ENCODE measurements at regions of chr20 and their contacts with region 1.

Region 1: GRCh38 chr20:58236612-58237330 is 8.3 kb upstream of the ANKRD60 start:
- DNase-seq: peak; percentile 63 to 92 (median 79)
- H3K4me3 ChIP-seq: peak overlapping the region in 3 of 4 donors; percentile 13 to 65 (median 48)
- H3K27ac ChIP-seq: peak overlapping the region in 4 of 5 donors; percentile 13 to 87 (median 46)
- H3K4me1 ChIP-seq: peaks cover 6 to 10% of the 10 kb centered on the region in 2 donors
- H3K27me3 ChIP-seq: no peaks in the 10 kb centered on the region
- CTCF ChIP-seq: peak; percentile 82 to 97 (median 92)
- POLR2A ChIP-seq: no peak

Region 2: DNA sequence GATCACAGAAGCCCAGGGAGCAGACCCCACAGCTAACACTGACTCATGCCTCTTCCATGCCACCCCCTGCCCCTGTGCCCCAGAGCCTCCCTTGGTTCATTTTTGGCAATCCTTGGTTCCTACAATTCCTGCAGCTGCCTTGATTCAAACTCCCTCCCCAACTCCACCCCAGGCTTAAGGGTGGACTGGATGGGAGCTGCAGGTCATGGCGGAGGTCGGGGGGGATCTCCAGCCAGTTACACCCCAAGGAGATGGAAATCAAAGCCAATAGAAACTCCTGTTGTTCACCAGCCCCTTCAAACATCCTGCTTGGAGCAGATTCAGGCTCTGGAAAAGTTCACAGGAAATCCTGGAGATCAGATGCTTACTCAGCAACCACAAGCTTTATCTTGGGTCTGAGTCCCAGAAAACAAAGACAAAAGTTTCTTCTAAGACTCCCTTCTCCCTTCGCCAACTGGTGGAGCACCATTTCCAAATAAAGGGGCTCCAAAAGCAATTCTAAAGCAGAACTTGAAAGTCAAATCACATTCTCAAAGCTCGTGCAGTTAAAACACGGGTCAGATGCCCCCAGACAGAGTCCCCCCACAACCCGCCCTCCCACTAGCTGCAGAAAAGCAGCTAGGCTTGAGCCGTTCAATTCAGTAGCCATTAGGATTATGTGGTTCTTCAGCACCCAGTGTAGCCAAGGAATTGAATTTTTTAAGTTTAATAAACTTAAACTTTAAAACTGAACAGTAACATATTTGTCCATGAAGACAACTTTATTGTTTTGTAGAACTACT is 157.8 kb before region 1 on chr20:
- intact Hi-C with region 1: no loop called
- DNase-seq: peak in 2 of 7 donors; percentile 16 to 39
- H3K4me3 ChIP-seq: no peak overlapping the region
- H3K27ac ChIP-seq: peak overlapping the region in 1 of 5 donors; percentile 20
- H3K4me1 ChIP-seq: no peaks in the 10 kb centered on the region
- H3K27me3 ChIP-seq: no peaks in the 10 kb centered on the region
- CTCF ChIP-seq: no peak
- POLR2A ChIP-seq: no peak

Region 3: DNA sequence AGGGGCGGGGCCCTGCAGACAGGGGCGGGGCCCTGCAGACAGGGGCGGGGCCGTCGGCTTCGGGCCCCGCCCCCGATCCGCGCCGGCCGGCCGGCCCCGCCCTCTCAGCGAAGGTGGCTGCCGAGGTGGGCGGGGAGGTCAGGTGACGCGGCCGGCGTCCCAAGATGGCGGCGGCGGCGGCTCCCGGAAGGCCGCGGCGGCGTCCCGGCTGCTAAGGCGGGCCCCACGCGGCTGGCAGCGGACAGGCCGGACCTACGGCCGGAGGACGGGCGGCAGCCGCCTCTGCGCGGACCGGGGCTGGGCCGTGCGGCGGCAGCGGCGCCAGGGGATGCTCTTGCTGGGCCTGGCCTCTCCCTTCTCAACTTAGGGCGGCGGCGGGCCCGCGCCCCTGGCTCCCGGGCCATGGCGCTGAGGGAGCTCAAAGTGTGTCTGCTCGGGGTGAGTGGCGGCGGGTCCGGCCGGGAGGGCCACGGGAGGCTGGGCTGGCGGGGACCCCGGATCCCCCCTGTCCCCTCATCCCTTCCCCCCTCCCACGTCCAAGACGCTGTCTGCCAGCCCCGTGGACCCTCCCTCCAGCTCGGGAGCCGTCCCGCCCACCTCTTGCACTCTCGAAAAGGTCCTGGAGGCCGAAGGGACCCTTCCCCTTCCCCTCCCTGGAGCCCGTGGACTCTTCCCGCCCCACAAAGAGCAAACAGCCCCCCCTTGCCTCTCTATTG is 73.0 kb after region 1 on chr20 and contains the start of gene RAB22A:
- intact Hi-C with region 1: no loop called
- DNase-seq: peak; percentile 74 to 86 (median 83)
- H3K4me3 ChIP-seq: peak within 1 kb of the TSS; percentile 91 to 98 (median 95)
- H3K27ac ChIP-seq: peak within 1 kb of the TSS in 4 of 5 donors; percentile 62 to 95 (median 86)
- H3K4me1 ChIP-seq: peaks cover 0 to 34% of the 10 kb centered on the region in 2 donors
- H3K27me3 ChIP-seq: no peaks in the 10 kb centered on the region
- CTCF ChIP-seq: no peak
- POLR2A ChIP-seq: peak; percentile 88 to 93
- total RNA-seq, gene RAB22A: 22.4 to 46.3 (median 28.8) TPM

Region 4: GRCh38 chr20:58330687-58331086 is 93.9 kb after region 1 on chr20:
- intact Hi-C with region 1: no loop called
- DNase-seq: peak in 2 of 7 donors; percentile 16 to 24
- H3K4me3 ChIP-seq: no peak overlapping the region
- H3K27ac ChIP-seq: peak overlapping the region in 1 of 5 donors; percentile 4
- H3K4me1 ChIP-seq: peaks cover 12 to 42% of the 10 kb centered on the region in 2 donors
- H3K27me3 ChIP-seq: no peaks in the 10 kb centered on the region
- CTCF ChIP-seq: no peak
- POLR2A ChIP-seq: no peak

Region 5: DNA sequence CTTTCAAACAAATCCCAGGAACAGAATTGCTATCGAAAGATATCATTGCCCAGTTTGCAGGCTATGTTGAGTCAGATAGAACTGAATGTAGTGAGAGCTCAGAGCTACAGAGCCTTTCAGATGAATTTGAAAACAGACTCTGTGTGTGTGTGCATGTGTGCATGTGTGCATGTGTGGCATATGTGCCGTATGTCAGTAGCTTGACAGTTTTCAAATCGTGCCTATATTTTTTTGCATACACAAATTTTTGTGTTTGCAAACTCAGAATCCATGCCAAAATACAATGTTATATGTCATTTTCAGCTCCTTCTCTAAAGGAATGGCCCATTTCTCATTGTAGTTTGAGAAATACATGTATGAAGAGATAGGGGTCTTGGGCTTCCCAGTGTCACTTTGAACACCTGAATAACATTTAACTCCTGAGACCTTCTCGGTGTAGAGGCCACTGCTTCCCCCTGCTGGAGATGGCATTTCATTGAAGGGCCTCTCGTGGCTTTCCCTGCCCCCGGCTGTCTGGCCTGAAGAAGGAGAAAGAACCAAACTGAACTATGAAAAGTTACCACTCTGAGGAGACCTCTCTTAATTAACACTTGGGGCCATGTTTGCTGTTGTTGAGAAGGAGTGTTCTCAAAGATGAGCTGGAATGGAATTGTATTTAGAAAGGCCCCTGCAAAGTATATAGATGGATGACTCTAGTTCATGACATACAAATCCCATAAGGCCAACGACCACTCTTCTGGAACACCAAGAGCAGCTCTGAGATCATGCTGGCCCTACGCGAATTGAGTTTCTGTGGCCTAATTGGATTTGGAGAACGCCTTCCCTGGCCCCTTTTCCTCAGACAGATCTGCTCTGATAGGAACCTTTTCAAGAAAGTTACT is 211.0 kb after region 1 on chr20:
- intact Hi-C with region 1: loop called (anchors 5 to 10 kb)
- DNase-seq: peak; percentile 43 to 84 (median 68)
- H3K4me3 ChIP-seq: no peak overlapping the region
- H3K27ac ChIP-seq: peak overlapping the region in 1 of 5 donors; percentile 24
- H3K4me1 ChIP-seq: no peaks in the 10 kb centered on the region
- H3K27me3 ChIP-seq: no peaks in the 10 kb centered on the region
- CTCF ChIP-seq: peak; percentile 64 to 79 (median 70)
- POLR2A ChIP-seq: no peak

Region 6: DNA sequence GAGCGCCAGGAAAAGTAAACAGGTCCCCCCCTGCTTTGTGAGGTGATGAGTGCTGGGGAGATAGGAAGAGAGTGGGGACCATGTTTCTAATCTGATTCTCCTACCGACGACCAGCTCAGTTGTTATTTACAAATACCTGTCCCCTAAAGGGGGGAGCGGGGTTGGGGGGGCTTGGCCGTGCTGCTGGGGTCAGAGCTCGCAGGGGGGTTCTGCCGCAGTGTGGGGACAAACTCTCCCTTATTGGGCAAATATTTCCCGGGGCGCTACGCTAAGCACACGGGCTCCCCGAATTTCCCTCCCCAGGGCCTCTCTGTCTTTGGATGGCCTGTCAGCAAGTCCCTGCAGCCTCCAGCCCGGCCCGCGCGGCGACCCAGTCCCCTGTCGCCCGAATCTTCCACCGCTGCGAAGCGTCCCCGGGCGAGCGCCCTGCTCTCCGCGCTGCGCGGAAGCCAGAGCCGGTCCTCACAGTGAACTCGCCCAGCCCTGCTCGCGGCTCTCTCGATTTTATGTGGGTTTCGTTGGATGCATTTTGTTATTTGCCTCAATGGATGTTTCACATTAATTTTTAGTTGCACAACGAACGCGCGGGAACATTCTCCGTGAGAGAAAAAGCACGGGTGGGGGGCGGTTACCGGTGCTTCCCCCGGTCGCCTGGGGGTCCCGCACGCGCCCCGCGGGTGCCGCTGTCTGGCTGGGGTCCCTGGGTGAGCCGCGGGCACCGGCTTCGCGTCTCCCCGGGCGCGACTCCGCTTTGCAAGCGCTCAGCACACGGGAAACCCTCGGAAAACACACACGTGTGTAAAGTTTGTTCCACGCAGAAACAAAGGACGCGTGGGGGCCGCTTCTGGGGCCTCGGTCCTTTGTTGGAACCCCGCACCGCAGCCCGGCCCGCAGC is 412.8 kb after region 1 on chr20:
- intact Hi-C with region 1: loop called in 1 of 2 experiments (anchors 10 kb)
- DNase-seq: peak in 3 of 7 donors; percentile 26 to 55 (median 44)
- H3K4me3 ChIP-seq: peak overlapping the region in 3 of 4 donors; percentile 25 to 92 (median 27)
- H3K27ac ChIP-seq: peak overlapping the region in 4 of 5 donors; percentile 80 to 97 (median 94)
- H3K4me1 ChIP-seq: peaks cover 8 to 34% of the 10 kb centered on the region in 2 donors
- H3K27me3 ChIP-seq: no peaks in the 10 kb centered on the region
- CTCF ChIP-seq: no peak
- POLR2A ChIP-seq: no peak

Region 7: DNA sequence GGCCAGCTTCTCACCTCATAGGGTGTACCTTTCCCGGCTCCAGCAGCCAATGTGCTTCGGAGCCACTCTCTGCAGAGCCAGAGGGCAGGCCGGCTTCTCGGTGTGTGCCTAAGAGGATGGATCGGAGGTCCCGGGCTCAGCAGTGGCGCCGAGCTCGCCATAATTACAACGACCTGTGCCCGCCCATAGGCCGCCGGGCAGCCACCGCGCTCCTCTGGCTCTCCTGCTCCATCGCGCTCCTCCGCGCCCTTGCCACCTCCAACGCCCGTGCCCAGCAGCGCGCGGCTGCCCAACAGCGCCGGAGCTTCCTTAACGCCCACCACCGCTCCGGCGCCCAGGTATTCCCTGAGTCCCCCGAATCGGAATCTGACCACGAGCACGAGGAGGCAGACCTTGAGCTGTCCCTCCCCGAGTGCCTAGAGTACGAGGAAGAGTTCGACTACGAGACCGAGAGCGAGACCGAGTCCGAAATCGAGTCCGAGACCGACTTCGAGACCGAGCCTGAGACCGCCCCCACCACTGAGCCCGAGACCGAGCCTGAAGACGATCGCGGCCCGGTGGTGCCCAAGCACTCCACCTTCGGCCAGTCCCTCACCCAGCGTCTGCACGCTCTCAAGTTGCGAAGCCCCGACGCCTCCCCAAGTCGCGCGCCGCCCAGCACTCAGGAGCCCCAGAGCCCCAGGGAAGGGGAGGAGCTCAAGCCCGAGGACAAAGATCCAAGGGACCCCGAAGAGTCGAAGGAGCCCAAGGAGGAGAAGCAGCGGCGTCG is 603.4 kb after region 1 on chr20:
- intact Hi-C with region 1: loop called in 1 of 2 experiments (anchors 10 kb)
- DNase-seq: no peak
- H3K4me3 ChIP-seq: no peak overlapping the region
- H3K27ac ChIP-seq: peak overlapping the region in 1 of 5 donors; percentile 38
- H3K4me1 ChIP-seq: no peaks in the 10 kb centered on the region
- H3K27me3 ChIP-seq: no peaks in the 10 kb centered on the region
- CTCF ChIP-seq: no peak
- POLR2A ChIP-seq: no peak